Aorta (tissue), 5 donors: ENCODE measurements at regions of chr16 and their contacts with region 1.

Region 1: DNA sequence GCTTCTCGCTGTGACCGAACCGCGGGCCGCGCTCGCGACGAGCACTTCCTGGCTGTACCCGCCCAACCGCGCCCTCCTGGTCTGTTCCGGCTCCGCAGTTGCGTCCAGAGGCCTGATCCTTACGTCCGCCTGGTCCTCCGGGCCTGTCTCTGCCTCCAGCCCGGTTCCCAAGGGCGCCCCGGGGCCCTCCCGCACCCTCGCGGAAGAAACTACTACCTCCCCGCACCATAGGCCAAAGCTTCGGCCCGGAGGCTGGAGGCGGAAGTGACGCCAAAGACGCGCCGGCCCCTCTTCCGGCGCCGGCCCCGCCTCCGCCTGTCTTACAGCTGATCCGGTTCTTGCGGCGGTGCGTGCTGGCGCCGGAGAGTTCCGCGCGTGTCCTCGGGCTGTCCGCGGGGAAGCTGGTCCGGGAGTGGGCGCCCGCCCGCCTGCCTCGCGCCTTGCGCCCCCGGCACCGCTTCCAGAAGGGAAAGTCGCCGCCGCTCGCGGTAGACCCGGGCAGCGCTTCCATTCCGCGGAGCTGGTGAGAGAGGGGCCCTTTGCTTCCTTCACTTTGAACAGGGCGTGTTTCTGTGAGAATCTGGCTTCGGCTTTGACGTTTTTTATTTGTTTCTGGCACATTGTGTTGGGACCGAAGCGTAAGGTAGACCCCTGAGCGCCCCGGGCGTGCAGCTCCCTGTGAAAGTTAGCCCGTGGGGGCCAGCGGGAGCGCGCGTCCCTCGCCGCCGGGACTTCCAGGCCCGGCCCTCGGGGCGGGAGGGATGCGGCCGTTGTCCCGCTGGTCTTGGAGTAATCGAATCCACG is at the start of gene ZNF778:
- DNase-seq: peak; percentile 89 to 94
- ATAC-seq: peak; percentile 97
- H3K4me3 ChIP-seq: peak within 1 kb of the TSS; percentile 62 to 87
- H3K27ac ChIP-seq: peak within 1 kb of the TSS in 1 of 2 donors; percentile 89
- H3K4me1 ChIP-seq: no peaks in the 10 kb centered on the region
- H3K27me3 ChIP-seq: no peaks in the 10 kb centered on the region
- total RNA-seq, gene ZNF778: 12.7 to 14.9 TPM

Region 2: DNA sequence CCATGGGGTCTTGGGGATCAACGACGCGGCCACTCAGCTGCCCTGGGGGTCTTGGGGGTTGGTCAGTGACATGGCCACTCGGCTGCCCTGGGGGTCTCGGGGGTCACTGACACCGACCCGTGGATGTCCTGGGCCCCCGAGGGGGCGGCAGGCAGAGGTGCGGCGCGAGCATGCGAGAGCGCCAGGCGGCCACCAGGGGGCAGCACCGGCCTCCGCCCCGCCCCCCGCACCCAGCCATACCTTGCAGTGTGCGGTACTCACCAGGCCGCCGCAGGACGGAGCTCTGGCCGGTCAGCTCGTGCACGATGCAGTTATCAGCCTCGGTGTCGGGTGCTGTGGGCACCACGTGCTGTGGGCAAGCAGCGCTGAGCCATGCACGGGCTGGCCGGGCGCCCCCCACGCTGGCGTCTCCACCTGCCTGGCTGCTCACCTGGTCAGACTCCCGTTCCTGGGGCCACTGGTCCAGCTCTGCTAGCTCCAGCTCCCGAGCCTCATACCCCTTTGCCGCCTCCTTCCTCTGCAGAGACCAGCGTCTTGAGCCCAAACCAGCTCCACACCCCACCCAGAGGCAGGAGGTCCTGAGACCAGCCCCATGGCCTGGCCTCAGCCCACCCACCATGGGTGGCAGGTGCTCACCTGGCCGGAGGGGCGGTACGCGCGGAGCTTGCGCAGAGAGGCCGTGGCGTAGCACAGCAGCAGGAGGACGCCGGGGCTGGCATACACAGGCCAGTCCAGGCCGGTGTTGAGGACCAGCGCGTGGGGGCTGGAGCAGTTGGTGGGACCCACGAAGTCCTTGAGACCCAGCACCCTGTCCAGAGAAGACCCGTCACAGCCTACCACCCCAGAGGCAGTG is 480.1 kb before region 1 on chr16:
- intact Hi-C with region 1: loop called (anchors 5 to 10 kb)
- DNase-seq: peak; percentile 75 to 90
- ATAC-seq: peak; percentile 71
- H3K4me3 ChIP-seq: no peak overlapping the region
- H3K27ac ChIP-seq: no peak overlapping the region
- H3K4me1 ChIP-seq: no peaks in the 10 kb centered on the region
- H3K27me3 ChIP-seq: no peaks in the 10 kb centered on the region

Region 3: DNA sequence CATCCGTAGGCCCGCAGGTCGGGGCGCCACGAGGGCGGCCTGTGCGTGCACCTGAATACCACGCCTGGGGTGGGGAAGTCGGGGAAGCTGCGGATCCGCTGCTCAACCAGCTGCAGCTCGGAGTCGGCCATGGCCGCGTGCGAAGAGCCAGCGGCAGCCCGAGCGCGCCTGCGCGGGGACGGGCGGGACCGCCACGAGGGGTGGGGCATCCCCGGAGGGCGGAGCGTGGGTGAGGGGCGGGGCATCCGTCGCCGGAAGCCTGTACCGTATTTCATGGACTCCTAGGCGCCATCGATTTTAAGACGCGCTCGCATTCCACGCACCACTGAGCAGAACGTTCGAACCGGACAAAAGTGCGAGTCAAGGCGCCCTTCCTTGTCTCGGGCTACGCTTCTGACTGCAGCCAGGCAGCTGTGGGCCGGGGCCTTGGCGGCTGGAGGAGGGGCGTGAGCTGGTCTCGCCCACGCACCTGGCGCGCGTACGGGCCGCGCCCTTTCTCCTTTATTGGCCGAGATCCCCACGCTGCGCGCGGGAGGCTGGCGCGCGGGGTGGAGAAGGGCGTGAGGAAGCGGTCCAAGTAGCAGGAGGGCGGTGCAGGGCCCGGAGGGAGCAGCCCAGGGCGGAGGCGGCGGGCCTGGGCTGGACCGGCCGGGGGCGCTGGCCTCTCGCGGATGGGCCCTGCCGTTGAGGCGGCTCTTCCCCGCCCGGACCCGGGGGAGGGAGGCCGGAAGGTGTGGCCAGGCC is 405.6 kb before region 1 on chr16 and contains the start of gene APRT:
- intact Hi-C with region 1: loop called in 1 of 2 experiments (anchors 5 kb)
- DNase-seq: peak; percentile 96 to 99
- ATAC-seq: peak; percentile 95
- H3K4me3 ChIP-seq: peak within 1 kb of the TSS; percentile 47 to 55
- H3K27ac ChIP-seq: peak within 1 kb of the TSS; percentile 64 to 81
- H3K4me1 ChIP-seq: no peaks in the 10 kb centered on the region
- H3K27me3 ChIP-seq: no peaks in the 10 kb centered on the region
- total RNA-seq, gene APRT: 60.2 to 61.3 TPM

Region 4: GRCh38 chr16:88941913-88942909 is 275.4 kb before region 1 on chr16:
- intact Hi-C with region 1: loop called in 1 of 2 experiments (anchors 10 kb)
- DNase-seq: peak in 1 of 2 donors; percentile 66
- ATAC-seq: no peak
- H3K4me3 ChIP-seq: peak overlapping the region in 1 of 2 donors; percentile 18
- H3K27ac ChIP-seq: no peak overlapping the region
- H3K4me1 ChIP-seq: no peaks in the 10 kb centered on the region
- H3K27me3 ChIP-seq: no peaks in the 10 kb centered on the region

Region 5: DNA sequence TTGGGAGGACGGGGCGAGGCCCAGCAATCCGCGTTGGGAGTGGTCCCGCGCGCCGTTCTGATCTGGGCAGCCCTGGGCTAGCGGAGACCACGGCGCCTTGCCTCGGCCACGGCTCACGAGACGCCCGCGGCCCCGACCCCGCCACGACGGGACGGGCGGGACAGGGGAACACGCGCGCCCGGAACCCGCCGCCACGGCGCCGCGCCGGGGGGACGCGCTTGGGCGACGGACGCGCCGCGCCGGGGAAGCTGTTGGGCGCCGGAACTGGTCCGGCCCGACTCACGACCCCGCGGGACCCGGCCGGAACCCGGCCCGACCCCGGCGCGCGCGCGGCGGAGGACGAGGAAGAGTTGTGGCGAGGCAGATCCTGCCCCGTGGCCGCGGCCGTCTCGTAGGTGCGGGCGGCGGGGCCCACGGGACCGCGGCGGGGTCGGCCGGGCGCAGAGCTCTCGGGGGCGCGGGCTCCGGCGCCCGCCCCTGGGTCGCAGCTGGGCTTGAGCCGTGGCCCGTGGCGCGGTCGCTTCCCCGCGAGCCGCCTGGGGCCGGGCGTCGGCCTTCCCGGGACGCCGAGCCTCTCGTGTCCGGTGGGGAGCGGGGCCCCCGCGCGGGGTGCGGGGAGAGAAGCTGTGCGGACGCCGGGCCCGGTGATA is 123.9 kb before region 1 on chr16 and contains the start of gene ACSF3:
- intact Hi-C with region 1: loop called in 1 of 2 experiments (anchors 10 kb)
- DNase-seq: peak; percentile 79 to 89
- ATAC-seq: peak; percentile 85
- H3K4me3 ChIP-seq: peak within 1 kb of the TSS; percentile 73 to 95
- H3K27ac ChIP-seq: no peak within 1 kb of the TSS
- H3K4me1 ChIP-seq: peaks cover 0 to 3% of the 10 kb centered on the region in 2 donors
- H3K27me3 ChIP-seq: no peaks in the 10 kb centered on the region
- total RNA-seq, gene ACSF3: 19.3 to 33.2 TPM